Posterior cingulate gyrus (tissue), 11 donors: ENCODE measurements at regions of chr20 and their contacts with region 1.

Region 1: DNA sequence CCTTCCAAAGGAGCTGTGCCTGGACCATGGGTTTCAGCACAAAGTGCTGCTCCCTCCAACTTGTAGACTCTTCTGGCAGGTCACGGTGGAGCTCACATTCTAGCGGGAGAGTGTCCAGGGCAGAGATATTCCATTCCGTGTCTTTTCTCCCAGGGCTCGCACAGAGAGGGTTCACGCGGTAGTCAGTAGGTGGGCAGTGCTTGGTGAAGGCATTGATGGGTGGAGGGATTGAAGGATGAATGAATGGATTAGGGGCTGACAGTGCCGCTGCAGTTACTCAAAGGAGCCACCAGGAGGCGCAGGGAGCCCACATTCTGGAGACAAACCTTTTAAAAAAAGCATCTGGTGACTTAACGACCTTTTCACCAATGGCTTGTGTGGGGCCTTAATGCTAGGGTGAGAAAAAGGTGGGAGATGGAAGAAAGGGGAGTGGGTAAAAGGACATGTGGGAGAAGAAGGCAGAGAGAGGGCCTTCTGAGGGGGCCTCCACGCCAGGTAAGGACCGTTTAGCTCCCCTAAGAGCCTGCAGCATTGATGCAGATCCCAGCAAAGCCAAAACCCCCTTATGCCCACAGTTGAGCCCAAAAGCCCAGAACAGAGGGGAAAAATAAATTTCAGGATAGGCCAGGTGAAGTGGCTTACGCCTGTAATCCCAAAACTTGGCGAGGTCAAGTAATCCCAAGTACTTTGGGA is 17.5 kb upstream of the FAM110A start:
- DNase-seq: peak in 9 of 10 donors; percentile 42 to 93 (median 62)

Region 2: DNA sequence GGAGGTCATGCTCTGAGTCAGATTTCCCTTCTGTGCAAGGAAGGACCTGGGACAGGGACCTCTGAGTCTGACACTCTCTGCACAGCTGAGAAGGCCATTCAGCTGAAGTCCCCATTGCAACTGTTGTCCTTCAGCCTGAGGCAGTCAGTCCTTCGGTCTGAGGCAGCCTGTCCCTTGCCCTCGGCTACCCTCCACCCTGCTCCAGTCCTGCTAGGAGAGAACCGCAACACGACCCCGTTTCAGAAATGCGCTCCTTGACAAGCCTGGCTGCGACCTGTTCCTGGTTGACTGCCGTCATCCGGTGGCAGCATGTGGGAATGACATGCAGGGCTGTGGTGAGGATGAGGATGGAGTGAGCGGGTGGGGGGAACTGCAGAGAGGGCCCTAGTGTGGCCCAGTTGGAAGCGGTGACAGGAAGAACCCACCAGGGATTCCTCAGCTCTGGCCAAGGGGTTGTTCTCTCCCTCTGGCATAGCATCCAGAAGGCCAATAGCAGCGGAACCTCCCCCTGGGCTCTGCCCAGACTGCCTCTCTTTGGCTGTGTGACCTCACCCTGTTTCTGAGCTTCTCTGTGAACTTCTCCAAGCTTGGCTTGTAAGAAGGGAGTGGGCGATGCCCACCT is 140.4 kb after region 1 on chr20:
- intact Hi-C with region 1: loop called (anchors 1 kb)
- DNase-seq: peak; percentile 42 to 94 (median 76)

Region 3: GRCh38 chr20:1108437-1108920 is 292.4 kb after region 1 on chr20:
- intact Hi-C with region 1: loop called (anchors 10 kb)
- DNase-seq: peak; percentile 37 to 95 (median 57)

Region 4: GRCh38 chr20:1212607-1213396 is 396.7 kb after region 1 on chr20:
- intact Hi-C with region 1: loop called (anchors 2 kb)
- DNase-seq: peak; percentile 53 to 95 (median 73)